ENCODE measurements at regions of chr4 and their contacts with region 1.

Region 1: DNA sequence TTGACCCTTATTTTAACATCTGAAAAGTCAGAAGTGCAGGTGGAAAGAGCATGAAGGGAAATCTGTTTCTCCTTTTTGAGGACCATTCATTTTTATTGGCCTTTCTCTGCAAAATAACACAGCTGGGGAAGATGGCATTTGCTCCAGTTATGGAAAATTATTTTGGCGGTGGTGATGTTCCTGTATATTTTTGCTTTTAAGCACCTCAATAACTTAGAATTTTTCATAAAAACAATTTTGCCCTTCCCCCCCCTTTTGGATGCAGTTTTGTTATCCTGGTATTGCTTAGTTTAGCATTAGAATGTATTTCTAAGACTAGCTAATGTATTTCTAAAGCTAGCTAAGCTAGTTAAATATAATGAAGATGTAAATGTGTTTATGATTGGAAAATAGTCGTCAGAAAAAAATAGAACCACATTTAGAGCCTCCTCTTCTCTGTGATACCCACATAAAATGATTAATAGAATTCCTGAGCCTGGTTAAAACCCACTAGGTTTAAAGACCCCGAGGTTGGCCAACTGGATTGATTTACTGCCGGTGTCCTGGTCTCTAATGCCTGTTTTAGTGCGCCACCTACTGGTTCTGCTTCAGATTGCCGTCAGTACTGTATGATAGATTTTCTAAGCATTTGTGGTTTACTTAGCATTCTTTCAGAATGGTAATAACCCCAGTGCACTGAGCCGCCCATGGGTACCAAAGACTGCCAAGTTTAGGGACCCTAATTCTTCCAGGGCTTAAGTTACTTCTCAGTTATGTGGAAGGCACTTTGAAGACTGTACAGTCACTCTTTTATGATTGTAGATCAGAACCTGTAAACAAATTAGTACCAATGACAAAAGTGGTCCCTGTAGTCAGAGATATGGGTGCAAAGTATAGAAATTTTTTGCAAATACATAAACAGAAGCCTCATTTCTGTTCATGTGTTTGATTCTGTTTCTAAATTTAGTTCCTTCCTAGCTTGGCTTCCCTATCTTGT is 11.4 kb downstream of the KLF3 start:
- DNase-seq: peak; percentile 66 to 89 (median 82)
- ATAC-seq: peak; percentile 50 to 57
- H3K4me3 Mint-ChIP-seq: peak overlapping the region; percentile 20 to 91 (median 82)
- H3K27ac Mint-ChIP-seq: peak overlapping the region; percentile 89 to 99 (median 94)
- H3K4me1 Mint-ChIP-seq: peaks cover 68 to 94% (median 89%) of the 10 kb centered on the region in 4 donors
- H3K27me3 Mint-ChIP-seq: no peaks in the 10 kb centered on the region

Region 2: GRCh38 chr4:38319456-38320342 is 355.7 kb before region 1 on chr4:
- POLR2A ChIA-PET with region 1: interaction called, 14 read pairs
- DNase-seq: peak; percentile 72 to 95 (median 86)
- ATAC-seq: peak; percentile 69 to 76
- H3K4me3 Mint-ChIP-seq: peak overlapping the region; percentile 72 to 92 (median 86)
- H3K27ac Mint-ChIP-seq: peak overlapping the region; percentile 82 to 98 (median 94)
- H3K4me1 Mint-ChIP-seq: peaks cover 29 to 67% (median 54%) of the 10 kb centered on the region in 4 donors
- H3K27me3 Mint-ChIP-seq: no peaks in the 10 kb centered on the region

Measured in naive thymus-derived CD8-positive, alpha-beta T cell (primary cell).